SK-N-SH (cell line): ENCODE measurements at regions of chr3 and their contacts with region 1.

Region 1: DNA sequence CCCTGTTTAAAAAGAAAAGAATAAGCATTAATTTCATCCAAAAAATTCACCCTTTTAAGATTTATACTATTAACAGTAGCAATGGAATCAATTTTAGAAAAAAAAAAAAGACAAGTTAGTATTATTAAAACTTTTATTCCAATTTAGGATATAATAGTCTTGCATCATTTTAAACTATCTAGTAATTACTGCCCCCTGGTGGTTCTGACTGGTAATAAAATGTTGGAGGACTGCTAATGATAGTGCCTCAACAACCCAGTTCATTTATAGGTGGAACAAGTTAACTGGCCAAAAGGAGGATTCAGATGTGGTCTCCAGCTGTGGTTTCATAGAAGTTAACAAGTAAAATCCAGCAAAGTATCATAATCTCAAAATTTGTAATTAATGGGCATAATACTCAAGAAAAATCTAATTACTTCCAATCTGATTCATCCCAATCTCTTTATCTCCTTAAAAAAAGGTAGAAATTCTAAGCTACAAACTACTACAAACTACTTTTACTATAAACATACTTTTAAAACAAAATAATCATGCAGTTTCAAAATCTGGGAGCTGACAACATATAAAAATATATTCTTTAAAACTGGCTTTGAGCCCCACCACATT is 30.7 kb upstream of the WDR49 start:
- DNase-seq: peak; percentile 41
- H3K4me3 ChIP-seq: no peak overlapping the region
- H3K27ac ChIP-seq: no peak overlapping the region
- H3K4me1 ChIP-seq: no peaks in the 10 kb centered on the region
- H3K27me3 ChIP-seq: no peaks in the 10 kb centered on the region
- CTCF ChIP-seq: peak; percentile 86
- EP300 ChIP-seq: no peak
- RAD21 ChIP-seq: peak; percentile 51

Region 2: DNA sequence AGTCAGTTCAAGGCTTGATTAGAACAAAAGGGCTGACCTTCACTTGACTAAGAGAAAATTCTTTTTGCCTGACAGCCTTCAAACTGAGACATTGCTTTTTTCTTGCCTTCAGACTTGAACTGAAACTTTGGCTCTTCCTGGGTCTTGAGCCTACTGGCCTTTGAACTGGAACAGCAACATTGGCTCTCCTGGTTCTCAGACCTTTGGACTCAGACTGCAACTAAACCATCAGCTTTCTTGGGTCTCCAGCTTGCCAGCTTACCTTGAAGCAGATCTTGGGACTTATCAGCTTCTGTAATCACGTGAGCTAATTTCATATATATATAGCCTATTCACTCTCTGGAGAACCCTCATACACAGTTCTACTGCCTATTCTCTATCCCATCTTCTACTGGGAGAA is 11.3 kb before region 1 on chr3:
- CTCF ChIA-PET with region 1: interaction called, 18 read pairs
- POLR2A ChIA-PET with region 1: no interaction called
- DNase-seq: no peak
- H3K4me3 ChIP-seq: no peak overlapping the region
- H3K27ac ChIP-seq: no peak overlapping the region
- H3K4me1 ChIP-seq: no peaks in the 10 kb centered on the region
- H3K27me3 ChIP-seq: no peaks in the 10 kb centered on the region
- CTCF ChIP-seq: no peak
- EP300 ChIP-seq: no peak
- RAD21 ChIP-seq: no peak

Region 3: DNA sequence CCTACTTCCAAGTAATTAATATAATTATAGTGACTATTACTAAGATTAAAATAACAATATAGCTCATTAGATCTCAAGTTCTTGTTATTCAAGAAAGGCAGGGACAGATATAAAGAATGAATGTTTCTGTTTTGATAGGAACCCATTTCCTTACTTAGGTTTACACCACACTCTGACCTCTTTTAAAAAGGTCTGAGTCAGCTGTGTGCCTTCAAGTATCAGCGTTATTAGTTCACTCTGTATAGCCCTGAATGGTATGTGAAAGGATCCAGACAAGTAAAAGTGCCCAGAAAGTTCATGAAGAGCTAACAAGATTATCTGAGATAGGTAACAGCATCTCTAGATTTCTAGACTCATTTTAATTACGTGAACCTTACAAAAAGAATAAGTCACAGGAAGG is 21.3 kb after region 1 on chr3:
- CTCF ChIA-PET with region 1: interaction called, 11 read pairs
- POLR2A ChIA-PET with region 1: no interaction called
- DNase-seq: no peak
- H3K4me3 ChIP-seq: no peak overlapping the region
- H3K27ac ChIP-seq: no peak overlapping the region
- H3K4me1 ChIP-seq: peaks cover 0 to 3% of the 10 kb centered on the region in 2 experiments; a peak in 2 of 4 replicates
- H3K27me3 ChIP-seq: no peaks in the 10 kb centered on the region
- CTCF ChIP-seq: no peak
- EP300 ChIP-seq: no peak
- RAD21 ChIP-seq: no peak